Calu3 (cell line): ENCODE measurements at regions of chr1 and their contacts with region 1.

Region 1: DNA sequence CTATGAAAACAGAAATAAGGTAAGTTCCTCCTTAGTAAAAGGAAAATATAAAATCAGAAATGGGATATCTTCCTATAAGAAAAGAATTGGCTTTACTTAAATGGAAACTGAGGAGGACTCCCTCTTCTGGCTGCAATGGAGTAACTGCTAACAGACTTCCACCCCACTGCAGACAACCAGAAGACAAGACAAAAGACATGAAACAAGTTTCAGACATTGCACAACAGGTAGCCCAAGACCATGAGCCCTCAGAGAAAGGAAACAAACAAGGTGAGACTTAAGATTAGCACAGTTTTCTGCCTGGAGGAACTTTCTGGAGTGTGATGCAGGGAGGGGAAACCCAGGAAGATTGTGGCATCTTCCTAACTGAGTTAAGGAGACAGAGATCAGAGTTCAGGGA is 17.0 kb upstream of the OLFML2B start:
- DNase-seq: no peak
- H3K4me3 Mint-ChIP-seq: no peak overlapping the region
- H3K27ac Mint-ChIP-seq: no peak overlapping the region
- H3K4me1 Mint-ChIP-seq: peaks cover 8% of the 10 kb centered on the region
- H3K27me3 Mint-ChIP-seq: no peaks in the 10 kb centered on the region
- CTCF ChIP-seq: peak; percentile 56

Region 2: GRCh38 chr1:161885003-161885402 is 155.7 kb before region 1 on chr1:
- CTCF ChIA-PET with region 1: interaction called, 10 read pairs
- intact Hi-C with region 1: no loop called
- DNase-seq: peak; percentile 21
- H3K4me3 Mint-ChIP-seq: no peak overlapping the region
- H3K27ac Mint-ChIP-seq: no peak overlapping the region
- H3K4me1 Mint-ChIP-seq: peaks cover 9% of the 10 kb centered on the region
- H3K27me3 Mint-ChIP-seq: no peaks in the 10 kb centered on the region
- CTCF ChIP-seq: no peak